ENCODE measurements at regions of chr5 and their contacts with region 1.

Region 1: GRCh38 chr5:33936004-33936380 is 194 bp upstream of the RXFP3 start:
- DNase-seq: peak; percentile 46
- ATAC-seq: peak; percentile 37; the same call in 1 of the 2 replicates
- H3K4me3 ChIP-seq: no peak overlapping the region
- H3K27ac ChIP-seq: no peak overlapping the region
- H3K4me1 ChIP-seq: peaks cover 14% of the 10 kb centered on the region
- H3K27me3 ChIP-seq: no peaks in the 10 kb centered on the region
- CTCF ChIP-seq: no peak

Region 2: DNA sequence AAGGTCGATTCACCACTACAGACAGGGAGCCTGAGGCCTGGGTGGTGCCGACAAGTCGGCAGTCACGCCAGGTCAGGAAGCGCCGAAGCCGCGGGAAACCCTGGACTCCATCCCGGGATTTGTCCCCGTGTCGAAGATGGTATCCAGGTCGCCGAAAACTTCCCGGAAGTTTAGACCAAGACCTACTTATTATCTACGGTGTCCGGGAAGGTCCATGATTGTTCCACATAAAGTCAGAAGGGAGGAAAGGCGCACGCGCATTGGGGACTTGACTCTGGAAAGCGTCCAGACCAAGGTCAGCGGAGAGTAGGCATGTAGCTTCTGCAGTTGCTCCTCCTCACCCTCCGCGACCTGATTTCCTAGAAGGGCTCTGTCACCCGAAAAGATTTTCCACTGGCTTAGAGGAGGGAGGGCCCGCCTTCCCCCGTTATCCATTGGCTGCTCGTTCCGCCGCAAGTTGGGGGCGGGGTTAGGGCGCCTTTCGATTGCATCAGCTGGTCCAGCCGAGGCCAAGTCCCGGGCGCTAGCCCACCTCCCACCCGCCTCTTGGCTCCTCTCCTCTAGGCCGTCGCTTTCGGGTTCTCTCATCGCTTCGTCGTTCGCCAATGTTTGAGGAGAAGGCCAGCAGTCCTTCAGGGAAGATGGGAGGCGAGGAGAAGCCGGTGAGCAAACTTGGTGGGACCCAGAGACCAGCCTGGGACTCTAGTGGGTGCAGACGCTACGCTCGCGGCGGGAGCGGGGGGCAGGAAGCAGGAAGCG is 495.3 kb before region 1 on chr5 and contains the start of gene TARS1:
- CTCF ChIA-PET with region 1: interaction called, 10 read pairs
- POLR2A ChIA-PET with region 1: interaction called, 4 read pairs
- intact Hi-C with region 1: loop called (anchors 1 kb)
- DNase-seq: peak; percentile 100
- ATAC-seq: peak; percentile 94
- H3K4me3 ChIP-seq: peak within 1 kb of the TSS; percentile 92
- H3K27ac ChIP-seq: peak within 1 kb of the TSS; percentile 83
- H3K4me1 ChIP-seq: peaks cover 24% of the 10 kb centered on the region
- H3K27me3 ChIP-seq: no peaks in the 10 kb centered on the region
- CTCF ChIP-seq: no peak
- total RNA-seq, gene TARS1: 184 and 221 TPM in 2 replicates

Region 3: DNA sequence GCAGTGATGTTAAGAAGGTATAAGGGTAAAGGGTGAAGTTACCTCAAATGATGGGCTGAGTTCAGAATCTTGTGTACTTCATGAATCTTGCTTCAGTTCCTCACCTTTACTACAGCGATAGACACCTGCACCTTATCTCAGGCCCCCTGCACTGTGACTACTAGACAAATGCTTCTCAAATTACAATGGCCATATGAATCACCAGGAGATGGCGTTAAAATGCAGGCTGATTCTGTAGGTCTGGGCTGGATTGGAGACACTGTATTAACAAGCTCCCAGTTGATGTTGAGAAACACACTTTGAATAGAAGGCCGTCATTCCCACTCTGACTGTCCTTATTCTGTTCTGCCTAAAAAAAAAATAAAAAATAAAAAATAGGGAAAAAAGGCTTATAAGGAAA is 465.4 kb before region 1 on chr5:
- CTCF ChIA-PET with region 1: interaction called, 12 read pairs
- POLR2A ChIA-PET with region 1: no interaction called
- intact Hi-C with region 1: loop called (anchors 1 kb)
- DNase-seq: peak; percentile 75
- ATAC-seq: peak; percentile 88
- H3K4me3 ChIP-seq: no peak overlapping the region
- H3K27ac ChIP-seq: no peak overlapping the region
- H3K4me1 ChIP-seq: no peaks in the 10 kb centered on the region
- H3K27me3 ChIP-seq: no peaks in the 10 kb centered on the region
- CTCF ChIP-seq: peak; percentile 73

Region 4: DNA sequence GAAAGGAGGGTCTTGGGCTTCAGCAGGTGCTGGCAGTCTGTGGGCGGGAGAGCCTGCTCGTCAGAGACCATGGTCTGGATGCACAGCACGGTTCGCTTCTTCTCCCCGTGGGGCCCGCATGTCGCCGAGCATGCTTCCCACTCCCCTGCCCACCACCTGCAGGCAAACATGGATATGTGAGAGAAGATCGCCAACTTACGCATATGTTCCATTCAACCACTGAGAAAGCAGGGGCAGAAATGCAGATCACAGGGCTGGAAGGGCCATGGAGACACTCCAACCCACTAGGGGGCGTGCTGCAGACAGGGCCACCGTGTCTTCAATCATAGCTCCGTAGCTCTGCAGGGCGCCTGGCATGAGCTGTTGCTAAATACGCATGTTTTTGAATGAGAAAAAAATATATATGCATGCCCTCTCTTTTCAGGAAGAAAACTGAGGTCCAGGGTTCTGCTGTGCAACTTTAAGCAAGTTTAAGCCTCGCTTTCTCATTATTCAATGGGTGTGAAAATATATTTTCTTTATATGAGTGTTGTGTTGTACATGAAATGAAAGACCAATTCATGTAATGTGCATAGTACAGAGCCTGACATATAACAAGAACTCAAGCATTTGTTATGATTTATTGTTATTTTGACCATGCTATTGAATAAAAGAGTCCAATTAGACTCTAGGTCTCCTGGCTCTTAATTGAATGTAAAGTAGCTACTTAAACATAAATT is 347.2 kb before region 1 on chr5:
- CTCF ChIA-PET with region 1: interaction called, 4 read pairs
- POLR2A ChIA-PET with region 1: interaction called, 3 read pairs
- intact Hi-C with region 1: loop called (anchors 1 kb)
- DNase-seq: peak; percentile 24
- ATAC-seq: peak; percentile 49; the same call in 1 of the 2 replicates
- H3K4me3 ChIP-seq: no peak overlapping the region
- H3K27ac ChIP-seq: no peak overlapping the region
- H3K4me1 ChIP-seq: no peaks in the 10 kb centered on the region
- H3K27me3 ChIP-seq: no peaks in the 10 kb centered on the region
- CTCF ChIP-seq: peak; percentile 73

Region 5: GRCh38 chr5:33867241-33867640 is 68.8 kb before region 1 on chr5:
- CTCF ChIA-PET with region 1: no interaction called
- POLR2A ChIA-PET with region 1: no interaction called
- intact Hi-C with region 1: no loop called
- DNase-seq: no peak
- ATAC-seq: no peak
- H3K4me3 ChIP-seq: no peak overlapping the region
- H3K27ac ChIP-seq: no peak overlapping the region
- H3K4me1 ChIP-seq: no peaks in the 10 kb centered on the region
- H3K27me3 ChIP-seq: no peaks in the 10 kb centered on the region
- CTCF ChIP-seq: no peak

Region 6: GRCh38 chr5:33964132-33964700 is 28.2 kb after region 1 on chr5:
- CTCF ChIA-PET with region 1: no interaction called
- POLR2A ChIA-PET with region 1: no interaction called
- intact Hi-C with region 1: no loop called
- DNase-seq: no peak
- ATAC-seq: no peak
- H3K4me3 ChIP-seq: no peak overlapping the region
- H3K27ac ChIP-seq: no peak overlapping the region
- H3K4me1 ChIP-seq: no peaks in the 10 kb centered on the region
- H3K27me3 ChIP-seq: no peaks in the 10 kb centered on the region
- CTCF ChIP-seq: no peak

Measured in PC-3 (cell line).